OCI-LY7 (cell line): ENCODE measurements at regions of chr12 and their contacts with region 1.

Region 1: DNA sequence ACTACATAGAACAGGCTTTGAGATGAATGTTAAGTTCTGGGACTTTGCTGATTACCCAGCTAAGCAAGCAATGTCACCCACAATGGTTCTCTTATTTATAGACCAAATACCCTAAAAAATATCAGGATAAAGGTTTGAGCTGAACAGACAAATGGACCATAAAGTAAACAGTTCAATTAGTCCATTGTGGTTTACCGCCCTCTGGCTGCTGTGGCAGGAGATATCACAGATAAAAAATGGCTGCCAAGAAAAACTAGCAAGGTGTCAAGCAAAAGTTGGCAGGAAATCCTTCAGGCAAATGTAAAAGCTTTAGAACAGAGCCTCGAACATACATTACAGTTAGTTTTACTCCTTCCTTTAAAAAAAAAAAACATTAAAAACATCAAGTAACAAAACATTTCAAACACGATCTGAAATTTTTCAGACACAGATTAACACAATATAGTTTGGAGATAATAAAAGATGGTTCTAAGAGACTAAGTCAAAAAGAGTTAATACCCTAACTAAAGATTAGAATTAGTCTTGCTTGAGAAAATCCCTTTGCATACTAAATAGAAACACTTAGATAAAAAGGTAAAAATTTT is 41.3 kb downstream of the MED13L start:
- DNase-seq: peak; percentile 66
- H3K4me3 ChIP-seq: no peak overlapping the region
- H3K27ac ChIP-seq: no peak overlapping the region
- H3K4me1 ChIP-seq: peaks cover 11% of the 10 kb centered on the region
- CTCF ChIP-seq: peak; percentile 93

Region 2: GRCh38 chr12:115960868-115961802 is 275.1 kb before region 1 on chr12:
- CTCF ChIA-PET with region 1: no interaction called
- POLR2A ChIA-PET with region 1: no interaction called
- intact Hi-C with region 1: no loop called
- DNase-seq: no peak
- H3K4me3 ChIP-seq: no peak overlapping the region
- H3K27ac ChIP-seq: no peak overlapping the region
- H3K4me1 ChIP-seq: no peaks in the 10 kb centered on the region
- CTCF ChIP-seq: no peak

Region 3: GRCh38 chr12:115998119-115998633 is 238.1 kb before region 1 on chr12:
- CTCF ChIA-PET with region 1: no interaction called
- POLR2A ChIA-PET with region 1: no interaction called
- intact Hi-C with region 1: loop called (anchors 2 kb)
- DNase-seq: peak; percentile 50
- H3K4me3 ChIP-seq: no peak overlapping the region
- H3K27ac ChIP-seq: no peak overlapping the region
- H3K4me1 ChIP-seq: peaks cover 5% of the 10 kb centered on the region
- CTCF ChIP-seq: peak; percentile 98

Region 4: DNA sequence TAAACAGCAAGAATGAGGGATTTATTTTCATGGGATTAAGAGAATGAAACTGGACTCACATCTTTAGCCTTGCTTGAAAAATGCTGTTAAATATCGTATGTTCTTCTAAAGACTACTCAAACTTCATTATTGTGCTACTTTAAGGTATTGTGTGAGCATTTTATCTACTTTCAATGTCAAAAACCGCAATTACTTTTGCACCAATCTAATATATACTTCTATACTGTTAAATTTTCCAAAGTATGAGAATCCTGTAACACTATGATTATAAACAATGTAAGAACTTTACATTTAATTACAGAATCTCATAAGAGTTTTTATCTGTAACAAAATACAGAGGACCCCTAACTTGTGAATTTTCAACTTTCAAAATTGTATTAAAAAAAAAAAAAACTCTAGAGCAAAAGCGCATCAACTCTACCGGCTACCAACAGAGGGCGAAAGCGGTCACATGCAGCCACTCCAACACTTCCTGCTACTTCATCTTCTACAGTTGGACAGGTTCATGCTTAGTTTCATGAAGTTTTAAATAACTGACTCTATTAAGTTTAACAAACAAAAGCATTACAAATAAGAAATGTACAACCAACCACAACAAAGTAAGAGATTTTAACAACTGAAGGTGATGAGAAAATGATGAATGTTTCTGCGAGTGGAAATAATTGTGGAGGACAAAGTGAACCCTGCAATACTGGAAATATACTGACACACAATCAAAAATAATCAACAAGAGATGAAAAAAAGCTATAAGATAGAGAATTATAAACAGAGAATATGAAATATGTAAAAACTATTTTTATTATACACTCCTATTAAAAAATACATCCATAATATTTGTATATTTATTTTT is 169.6 kb before region 1 on chr12:
- CTCF ChIA-PET with region 1: no interaction called
- POLR2A ChIA-PET with region 1: no interaction called
- intact Hi-C with region 1: loop called (anchors 5 kb)
- DNase-seq: peak; percentile 62
- H3K4me3 ChIP-seq: no peak overlapping the region
- H3K27ac ChIP-seq: no peak overlapping the region
- H3K4me1 ChIP-seq: no peaks in the 10 kb centered on the region
- CTCF ChIP-seq: peak; percentile 100

Region 5: GRCh38 chr12:116152268-116152667 is 84.0 kb before region 1 on chr12:
- CTCF ChIA-PET with region 1: no interaction called
- POLR2A ChIA-PET with region 1: no interaction called
- intact Hi-C with region 1: loop called (anchors 5 kb)
- DNase-seq: no peak
- H3K4me3 ChIP-seq: no peak overlapping the region
- H3K27ac ChIP-seq: no peak overlapping the region
- H3K4me1 ChIP-seq: no peaks in the 10 kb centered on the region
- CTCF ChIP-seq: no peak